Gastrocnemius medialis (tissue), 4 donors: ENCODE measurements at regions of chr4 and their contacts with region 1.

Region 1: GRCh38 chr4:144174401-144175067 is 34.0 kb upstream of the GYPA start:
- DNase-seq: no peak
- ATAC-seq: peak in 1 of 2 donors; percentile 50
- H3K4me3 ChIP-seq: no peak overlapping the region
- H3K27ac ChIP-seq: no peak overlapping the region
- H3K4me1 ChIP-seq: no peaks in the 10 kb centered on the region
- H3K27me3 ChIP-seq: no peaks in the 10 kb centered on the region
- CTCF ChIP-seq: peak in 4 of 5 experiments; percentile 20 to 40 (median 30)
- POLR2A ChIP-seq: no peak

Region 2: DNA sequence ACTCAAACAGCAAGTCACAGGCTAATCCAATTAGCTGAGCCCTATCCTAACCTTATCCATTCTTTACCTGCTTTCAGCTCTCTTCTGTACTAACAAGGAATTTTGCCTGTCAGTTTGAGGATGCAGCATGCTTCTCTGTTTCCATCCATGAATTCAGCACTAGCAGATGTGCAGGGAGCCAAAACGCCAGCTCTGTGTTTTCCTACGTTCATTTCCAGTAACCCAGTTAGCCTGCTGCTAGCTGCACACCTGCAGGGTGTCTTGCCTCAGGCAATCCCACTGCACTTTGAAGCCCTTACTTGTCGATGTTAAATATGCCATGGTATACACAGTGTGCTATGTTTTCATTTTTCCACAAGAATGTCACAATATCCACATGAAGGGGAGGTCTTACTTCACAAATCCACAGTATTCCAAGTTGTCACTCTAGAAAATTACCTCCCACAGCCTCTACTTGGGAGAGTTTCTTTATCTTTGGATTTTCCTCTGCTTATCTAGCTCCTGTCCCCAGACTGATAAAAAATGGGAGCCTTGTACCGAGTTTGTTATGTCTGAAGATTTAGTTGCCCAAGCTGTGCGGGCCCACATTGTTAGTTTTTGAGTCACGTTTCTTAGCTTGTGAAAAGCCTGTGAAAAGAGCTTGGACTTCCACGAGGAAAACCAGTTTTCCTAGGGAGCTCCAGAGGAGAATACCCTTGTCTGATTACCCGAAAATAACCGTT is 343.8 kb after region 1 on chr4:
- in situ Hi-C with region 1: no loop called
- intact Hi-C with region 1: no loop called
- DNase-seq: no peak
- ATAC-seq: no peak
- H3K4me3 ChIP-seq: no peak overlapping the region
- H3K27ac ChIP-seq: no peak overlapping the region
- H3K4me1 ChIP-seq: no peaks in the 10 kb centered on the region
- H3K27me3 ChIP-seq: no peaks in the 10 kb centered on the region
- CTCF ChIP-seq: no peak
- POLR2A ChIP-seq: no peak

Region 3: DNA sequence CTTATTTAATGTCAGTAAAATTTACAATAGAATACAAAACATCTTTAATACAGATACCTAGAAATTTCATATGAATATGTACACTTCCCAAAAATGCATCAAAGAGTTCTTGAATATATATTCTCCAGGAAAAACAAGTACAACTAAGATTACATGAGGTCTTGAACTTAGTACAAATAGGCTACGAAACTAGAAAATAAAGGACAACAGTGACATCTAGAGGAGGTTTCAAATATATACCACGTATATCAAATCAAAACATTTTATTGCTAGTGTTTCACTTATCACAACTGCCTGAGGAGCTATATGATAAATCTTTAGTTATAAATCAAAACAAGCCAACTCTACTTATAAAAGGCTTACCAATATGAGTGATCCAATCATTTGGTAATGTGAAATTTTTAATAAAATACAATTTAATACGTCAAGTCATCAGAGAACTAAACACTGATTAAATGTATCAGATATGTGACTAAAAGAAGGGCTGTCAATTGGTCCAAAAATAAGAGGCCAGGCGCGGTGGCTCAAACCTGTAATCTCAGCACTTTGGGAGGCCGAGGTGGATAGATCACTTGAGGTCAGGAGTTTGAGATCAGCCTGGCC is 886.9 kb after region 1 on chr4:
- in situ Hi-C with region 1: loop called (anchors 5 to 10 kb)
- intact Hi-C with region 1: loop called (anchors 2 kb)
- DNase-seq: no peak
- ATAC-seq: peak; percentile 68 to 81
- H3K4me3 ChIP-seq: no peak overlapping the region
- H3K27ac ChIP-seq: no peak overlapping the region
- H3K4me1 ChIP-seq: peaks cover 0 to 4% of the 10 kb centered on the region in 2 donors
- H3K27me3 ChIP-seq: no peaks in the 10 kb centered on the region
- CTCF ChIP-seq: peak in 4 of 5 experiments; percentile 42 to 59 (median 48)
- POLR2A ChIP-seq: no peak